CD4-positive, alpha-beta memory T cell (primary cell): ENCODE measurements at regions of chr2 and their contacts with region 1.

Region 1: DNA sequence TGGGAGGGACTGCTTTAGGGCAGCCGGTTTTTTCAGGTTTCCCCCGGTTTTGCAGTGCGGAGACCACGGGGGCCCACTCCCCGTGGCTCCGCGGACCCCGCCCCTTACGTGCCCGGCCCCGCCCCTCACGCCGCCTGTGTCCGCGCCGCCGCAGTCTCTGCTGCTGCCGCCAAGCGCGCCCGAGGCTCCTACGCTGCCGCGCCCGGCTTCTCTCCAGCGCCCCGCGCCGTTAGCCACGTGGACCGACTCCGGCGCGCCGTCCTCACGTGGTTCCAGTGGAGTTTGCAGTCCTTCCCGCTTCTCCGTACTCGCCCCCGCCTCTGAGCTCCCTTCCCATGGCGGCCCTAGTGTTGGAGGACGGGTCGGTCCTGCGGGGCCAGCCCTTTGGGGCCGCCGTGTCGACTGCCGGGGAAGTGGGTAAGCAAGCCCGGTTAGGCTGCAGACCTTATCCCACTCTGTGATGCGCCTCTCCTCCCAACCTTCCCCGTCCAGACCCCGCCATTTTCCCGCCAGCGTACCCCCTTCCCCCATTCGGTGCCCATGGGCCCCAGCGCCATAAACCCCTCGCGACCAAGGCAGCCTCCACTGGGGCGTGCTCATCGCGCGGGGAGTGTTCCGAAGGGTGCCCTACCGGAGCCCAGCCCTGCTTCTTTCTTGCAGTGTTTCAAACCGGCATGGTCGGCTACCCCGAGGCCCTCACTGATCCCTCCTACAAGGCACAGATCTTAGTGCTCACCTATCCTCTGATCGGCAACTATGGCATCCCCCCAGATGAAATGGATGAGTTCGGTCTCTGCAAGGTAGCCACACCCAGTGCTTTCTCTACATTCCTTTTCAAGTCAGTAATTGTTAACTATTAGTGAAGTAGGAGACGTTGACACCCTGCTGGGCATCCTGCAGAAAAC is at the start of gene CAD:
- DNase-seq: peak; percentile 81 to 85 (median 82)
- H3K4me3 ChIP-seq: peak within 1 kb of the TSS; percentile 37 to 84
- H3K4me3 Mint-ChIP-seq: peak within 1 kb of the TSS; percentile 90 to 97 (median 95)
- H3K27ac ChIP-seq: peak within 1 kb of the TSS; percentile 78
- H3K27ac Mint-ChIP-seq: peak within 1 kb of the TSS; percentile 82 to 97 (median 94)
- H3K4me1 ChIP-seq: peaks cover 29% of the 10 kb centered on the region
- H3K4me1 Mint-ChIP-seq: peaks cover 26 to 42% (median 35%) of the 10 kb centered on the region in 4 donors
- H3K27me3 ChIP-seq: no peaks in the 10 kb centered on the region
- H3K27me3 Mint-ChIP-seq: no peaks in the 10 kb centered on the region
- total RNA-seq, gene CAD: 47.6 to 49.3 TPM

Region 2: GRCh38 chr2:27162151-27163121 is 55.0 kb before region 1 on chr2:
- CTCF ChIA-PET with region 1: no interaction called
- POLR2A ChIA-PET with region 1: no interaction called
- intact Hi-C with region 1: no loop called
- DNase-seq: no peak
- H3K4me3 ChIP-seq: no peak overlapping the region
- H3K4me3 Mint-ChIP-seq: no peak overlapping the region
- H3K27ac ChIP-seq: no peak overlapping the region
- H3K27ac Mint-ChIP-seq: no peak overlapping the region
- H3K4me1 ChIP-seq: no peaks in the 10 kb centered on the region
- H3K4me1 Mint-ChIP-seq: peaks cover 0 to 4% (median under 1%) of the 10 kb centered on the region in 4 donors
- H3K27me3 ChIP-seq: no peaks in the 10 kb centered on the region
- H3K27me3 Mint-ChIP-seq: peaks cover 0 to 7% of the 10 kb centered on the region in 2 donors

Region 3: GRCh38 chr2:27264753-27265535 is 47.5 kb after region 1 on chr2:
- CTCF ChIA-PET with region 1: no interaction called
- POLR2A ChIA-PET with region 1: interaction called, 4 read pairs
- intact Hi-C with region 1: loop called (anchors 5 kb)
- DNase-seq: peak; percentile 39 to 73 (median 50)
- H3K4me3 ChIP-seq: peak overlapping the region in 1 of 2 donors; percentile 47
- H3K4me3 Mint-ChIP-seq: peak overlapping the region; percentile 70 to 94 (median 83)
- H3K27ac ChIP-seq: no peak overlapping the region
- H3K27ac Mint-ChIP-seq: peak overlapping the region in 3 of 7 donors; percentile 21 to 54 (median 52)
- H3K4me1 ChIP-seq: peaks cover 23% of the 10 kb centered on the region
- H3K4me1 Mint-ChIP-seq: peaks cover 23 to 38% (median 25%) of the 10 kb centered on the region in 4 donors
- H3K27me3 ChIP-seq: peaks cover 31% of the 10 kb centered on the region
- H3K27me3 Mint-ChIP-seq: peaks cover 35 to 38% of the 10 kb centered on the region in 2 donors